ENCODE measurements at regions of chr6 and their contacts with region 1.

Region 1: GRCh38 chr6:139375232-139376016 is 976 bp upstream of the CITED2 start:
- DNase-seq: peak; percentile 90 to 93 (median 91)
- H3K4me3 ChIP-seq: peak overlapping the region; percentile 96
- H3K27ac ChIP-seq: peak overlapping the region; percentile 93 to 95
- H3K4me1 ChIP-seq: peaks cover 4% of the 10 kb centered on the region
- H3K27me3 ChIP-seq: no peaks in the 10 kb centered on the region
- CTCF ChIP-seq: no peak
- EP300 ChIP-seq: no peak
- POLR2A ChIP-seq: peak; percentile 54

Region 2: GRCh38 chr6:139448051-139448649 is 72.7 kb after region 1 on chr6:
- intact Hi-C with region 1: loop called in 2 of 4 experiments (anchors 5 to 10 kb)
- DNase-seq: no peak
- H3K4me3 ChIP-seq: no peak overlapping the region
- H3K27ac ChIP-seq: peak overlapping the region in 1 of 2 donors; percentile 28
- H3K4me1 ChIP-seq: peaks cover 9% of the 10 kb centered on the region
- H3K27me3 ChIP-seq: no peaks in the 10 kb centered on the region
- CTCF ChIP-seq: no peak
- EP300 ChIP-seq: no peak
- POLR2A ChIP-seq: no peak

Region 3: GRCh38 chr6:139540276-139540675 is 164.9 kb after region 1 on chr6:
- intact Hi-C with region 1: loop called in 1 of 4 experiments (anchors 10 kb)
- DNase-seq: no peak
- H3K4me3 ChIP-seq: no peak overlapping the region
- H3K27ac ChIP-seq: no peak overlapping the region
- H3K4me1 ChIP-seq: no peaks in the 10 kb centered on the region
- H3K27me3 ChIP-seq: no peaks in the 10 kb centered on the region
- CTCF ChIP-seq: no peak
- EP300 ChIP-seq: no peak
- POLR2A ChIP-seq: no peak

Region 4: DNA sequence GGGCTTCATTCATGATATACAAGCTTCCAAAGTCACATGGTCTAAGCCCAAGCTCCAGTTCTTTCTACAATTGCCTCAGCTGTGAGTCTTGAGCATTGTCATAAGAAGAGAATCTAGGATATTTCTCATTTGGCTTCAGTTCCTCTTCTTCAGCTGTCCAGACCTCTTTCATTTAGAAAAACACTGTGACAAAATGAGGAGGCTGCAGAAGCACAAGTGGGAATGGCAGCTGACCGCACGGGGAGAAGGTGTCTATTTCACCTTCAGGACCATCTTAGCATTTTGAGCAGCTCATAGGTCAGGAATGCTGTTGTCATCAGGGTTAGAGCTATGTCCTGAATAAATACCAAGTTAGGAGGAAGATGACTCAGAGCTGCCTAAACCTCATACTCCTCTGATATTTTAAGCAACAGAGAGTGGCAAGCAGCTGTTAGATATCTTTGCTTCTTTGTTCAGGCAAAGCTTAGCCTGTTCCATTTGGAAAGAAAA is 389.1 kb after region 1 on chr6:
- intact Hi-C with region 1: loop called in 3 of 4 experiments (anchors 5 to 10 kb)
- DNase-seq: peak in 2 of 5 donors; percentile 24 to 31
- H3K4me3 ChIP-seq: no peak overlapping the region
- H3K27ac ChIP-seq: peak overlapping the region in 1 of 2 donors; percentile 68
- H3K4me1 ChIP-seq: peaks cover 4% of the 10 kb centered on the region
- H3K27me3 ChIP-seq: no peaks in the 10 kb centered on the region
- CTCF ChIP-seq: no peak
- EP300 ChIP-seq: no peak
- POLR2A ChIP-seq: no peak

Region 5: GRCh38 chr6:140062043-140063020 is 686.9 kb after region 1 on chr6:
- intact Hi-C with region 1: loop called in 1 of 4 experiments (anchors 10 kb)
- DNase-seq: peak; percentile 34 to 74 (median 57)
- H3K4me3 ChIP-seq: no peak overlapping the region
- H3K27ac ChIP-seq: peak overlapping the region in 1 of 2 donors; percentile 43
- H3K4me1 ChIP-seq: peaks cover 10% of the 10 kb centered on the region
- H3K27me3 ChIP-seq: no peaks in the 10 kb centered on the region
- CTCF ChIP-seq: no peak
- EP300 ChIP-seq: no peak
- POLR2A ChIP-seq: no peak

Region 6: DNA sequence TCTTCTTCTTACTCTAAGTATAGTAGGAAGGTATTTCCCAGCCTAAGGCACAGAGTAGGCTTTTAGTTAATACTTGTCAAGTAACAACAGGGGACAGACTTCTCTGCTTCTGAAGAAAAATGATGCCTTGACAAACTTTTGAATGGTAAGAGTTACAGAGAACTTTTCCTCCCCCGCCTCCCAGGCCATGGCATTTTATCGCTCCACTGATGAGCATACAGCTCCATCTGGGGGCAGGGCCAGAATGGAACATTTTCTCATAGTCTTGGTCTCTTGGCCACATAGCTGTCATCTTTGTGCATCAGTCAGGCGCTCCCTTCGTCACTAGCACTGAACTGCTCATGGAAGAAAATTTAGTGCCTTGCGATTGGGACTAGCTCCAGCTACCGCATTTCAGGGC is 1065.8 kb after region 1 on chr6:
- intact Hi-C with region 1: loop called in 2 of 4 experiments (anchors 5 to 10 kb)
- DNase-seq: peak; percentile 38 to 62 (median 46)
- H3K4me3 ChIP-seq: no peak overlapping the region
- H3K27ac ChIP-seq: no peak overlapping the region
- H3K4me1 ChIP-seq: peaks cover 5% of the 10 kb centered on the region
- H3K27me3 ChIP-seq: no peaks in the 10 kb centered on the region
- CTCF ChIP-seq: peak in 2 of 3 donors; percentile 22 to 30
- EP300 ChIP-seq: no peak
- POLR2A ChIP-seq: no peak